AG04449 (cell line): ENCODE measurements at regions of chr4 and their contacts with region 1.

Region 1: DNA sequence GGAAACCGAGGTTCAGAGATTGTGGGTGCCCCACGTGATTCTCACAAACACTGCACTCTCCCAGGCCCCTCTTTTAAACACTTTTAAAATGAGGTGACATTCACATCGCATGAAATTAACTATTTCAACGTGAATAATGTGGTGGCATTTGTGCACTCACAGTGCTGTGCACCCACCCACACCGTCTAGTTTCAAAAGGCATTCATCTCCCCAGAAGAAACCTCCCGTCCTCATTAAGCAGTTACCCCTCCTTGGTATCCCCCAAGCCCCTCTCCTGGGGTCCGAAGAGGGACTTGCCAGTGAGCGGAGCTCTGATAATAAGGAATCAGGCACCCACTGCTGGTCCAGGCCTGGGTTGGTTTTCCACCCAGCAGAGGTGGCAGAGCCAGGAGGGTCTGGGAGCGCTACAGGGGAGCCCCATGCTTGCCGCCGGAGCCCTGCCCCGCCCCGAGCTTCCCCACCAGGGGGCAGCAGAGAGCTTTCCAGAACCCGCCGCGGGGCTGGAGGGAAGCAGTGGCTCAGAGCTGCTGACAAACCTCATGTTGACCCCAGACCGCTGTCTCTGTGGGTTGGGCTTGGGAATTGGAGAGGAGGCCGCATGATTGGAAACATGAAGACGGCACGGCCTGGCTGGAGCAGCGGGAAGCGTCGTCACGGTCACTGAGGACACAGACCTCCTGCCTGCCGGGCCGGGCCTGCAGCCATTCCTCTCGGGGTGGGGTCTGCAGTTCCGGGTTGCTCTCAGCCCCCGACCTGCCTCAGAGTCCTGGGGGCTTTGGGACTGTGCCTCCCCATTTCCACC is 27.5 kb upstream of the HTRA3 start:
- DNase-seq: peak; percentile 16
- H3K4me3 ChIP-seq: no peak overlapping the region
- CTCF ChIP-seq: peak; percentile 95

Region 2: DNA sequence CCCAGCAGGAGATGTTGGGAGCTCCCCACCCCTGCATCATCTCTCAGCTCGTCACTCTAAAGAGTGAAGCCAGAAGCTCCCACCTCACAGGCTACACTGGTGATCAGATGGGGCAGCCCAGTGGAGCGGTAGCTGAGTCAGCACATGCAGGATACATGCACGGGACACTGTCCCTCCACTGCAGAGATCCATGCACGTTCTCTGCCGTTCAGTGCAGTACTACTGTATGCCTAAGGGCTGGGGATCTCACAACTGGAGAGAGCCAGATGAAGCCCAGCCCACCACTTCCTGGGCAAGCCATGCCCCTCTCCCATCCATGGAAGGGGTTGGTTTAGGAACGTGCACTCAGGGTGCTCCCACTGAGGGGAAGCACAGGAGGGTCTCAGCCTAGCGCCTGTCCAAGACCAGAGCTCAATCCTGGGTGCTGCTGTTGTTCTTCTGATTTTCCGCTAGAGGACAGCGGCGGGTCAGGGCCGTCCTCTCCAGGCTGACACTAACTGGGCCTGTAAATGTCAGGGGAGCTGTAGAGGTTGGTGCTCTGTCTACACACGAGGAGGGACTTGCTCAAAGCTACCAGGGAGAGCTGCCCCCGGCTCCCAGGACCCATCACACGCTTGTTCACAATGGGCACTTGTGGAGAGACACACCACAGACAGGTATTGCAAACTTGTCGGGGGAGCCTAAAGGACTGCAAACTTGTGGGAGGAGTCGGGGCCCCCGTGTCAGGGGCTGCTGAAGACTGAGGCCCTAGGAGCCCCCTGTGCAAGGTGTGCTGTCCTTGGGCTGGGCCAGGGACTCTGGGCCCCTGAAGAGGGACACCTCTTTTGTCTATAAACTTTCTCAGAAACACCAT is 65.3 kb before region 1 on chr4:
- CTCF ChIA-PET with region 1: interaction called, 21 read pairs
- POLR2A ChIA-PET with region 1: no interaction called
- DNase-seq: no peak
- H3K4me3 ChIP-seq: no peak overlapping the region
- CTCF ChIP-seq: peak; percentile 86

Region 3: DNA sequence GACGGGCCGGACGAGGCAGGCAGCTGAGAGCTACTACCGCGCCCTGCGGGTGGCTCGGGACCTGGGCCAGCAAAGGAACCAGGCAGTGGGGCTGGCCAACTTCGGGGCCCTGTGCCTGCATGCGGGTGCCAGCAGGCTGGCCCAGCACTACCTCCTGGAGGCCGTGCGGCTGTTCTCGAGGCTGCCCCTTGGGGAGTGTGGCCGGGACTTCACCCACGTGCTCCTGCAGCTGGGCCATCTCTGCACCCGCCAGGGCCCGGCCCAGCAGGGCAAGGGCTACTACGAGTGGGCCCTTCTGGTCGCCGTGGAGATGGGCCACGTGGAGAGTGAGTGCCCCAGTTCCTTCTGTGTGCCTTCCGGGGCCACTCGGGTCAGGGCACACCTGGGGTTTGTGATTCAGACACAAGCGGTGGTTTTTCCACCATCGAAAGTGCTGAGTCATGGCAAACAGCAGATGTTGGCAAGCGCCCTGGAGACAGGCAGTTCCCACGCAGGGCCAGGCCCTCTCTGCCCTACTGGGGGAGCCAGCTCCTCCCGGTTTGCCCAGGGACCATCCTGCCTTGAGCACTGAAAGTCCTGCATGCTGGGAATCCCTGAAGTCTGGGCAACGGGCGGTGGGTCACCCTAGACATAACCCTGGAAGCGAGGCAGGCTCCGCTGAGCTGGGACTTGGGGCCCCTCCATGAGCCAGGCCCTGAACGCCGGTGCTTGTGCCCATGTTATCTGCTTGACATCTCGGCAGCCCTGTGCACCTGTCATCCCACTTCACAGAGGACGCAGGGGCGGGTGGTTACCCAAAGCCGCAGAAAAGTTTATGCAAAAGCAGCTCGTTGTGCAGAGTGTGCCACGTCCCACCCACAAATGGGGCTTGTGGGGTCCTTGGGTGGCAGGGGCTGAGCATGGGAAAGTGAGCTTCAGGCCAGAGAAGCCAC is 13.5 kb before region 1 on chr4:
- CTCF ChIA-PET with region 1: interaction called, 17 read pairs
- POLR2A ChIA-PET with region 1: no interaction called
- DNase-seq: peak; percentile 16
- H3K4me3 ChIP-seq: no peak overlapping the region
- CTCF ChIP-seq: no peak

Region 4: DNA sequence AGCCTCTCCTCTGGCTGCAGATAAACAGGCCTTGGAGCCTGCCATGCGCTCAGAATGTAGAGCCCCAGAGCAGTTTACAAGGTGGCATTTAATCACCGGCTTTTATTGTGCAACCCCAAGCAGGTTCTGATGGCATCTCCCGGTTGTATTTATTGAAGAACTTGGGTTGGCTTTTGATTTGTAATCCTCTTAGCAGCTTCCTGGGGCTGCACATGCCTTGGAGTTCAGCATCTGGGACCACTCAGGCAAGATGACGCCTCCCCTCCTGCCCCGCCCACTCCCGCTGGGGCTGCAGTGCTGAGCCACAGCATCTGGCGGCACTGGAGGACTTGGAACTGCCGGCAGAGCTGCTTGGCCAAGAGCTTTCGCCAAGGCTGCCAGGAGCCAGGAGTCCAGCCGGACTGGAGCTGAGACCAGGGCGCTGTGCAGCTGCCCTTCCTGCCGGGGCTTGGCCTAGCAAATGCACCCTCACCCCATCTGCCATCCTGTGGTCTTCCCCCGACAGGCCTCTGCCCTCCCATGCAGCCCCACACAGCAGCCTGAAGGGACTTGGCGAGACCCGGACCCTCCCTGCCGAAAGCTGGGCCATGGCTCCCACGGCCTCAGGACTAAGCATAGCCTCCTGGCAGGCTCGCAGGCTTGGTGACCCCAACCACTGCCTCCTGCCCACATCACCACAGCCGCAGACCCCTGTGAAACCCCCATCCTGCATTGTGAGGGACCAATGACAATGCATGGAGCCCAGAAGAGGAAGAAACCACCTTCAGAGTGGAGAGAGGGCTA is 32.9 kb after region 1 on chr4:
- CTCF ChIA-PET with region 1: interaction called, 11 read pairs
- POLR2A ChIA-PET with region 1: no interaction called
- DNase-seq: peak; percentile 36
- H3K4me3 ChIP-seq: no peak overlapping the region
- CTCF ChIP-seq: peak; percentile 82

Region 5: DNA sequence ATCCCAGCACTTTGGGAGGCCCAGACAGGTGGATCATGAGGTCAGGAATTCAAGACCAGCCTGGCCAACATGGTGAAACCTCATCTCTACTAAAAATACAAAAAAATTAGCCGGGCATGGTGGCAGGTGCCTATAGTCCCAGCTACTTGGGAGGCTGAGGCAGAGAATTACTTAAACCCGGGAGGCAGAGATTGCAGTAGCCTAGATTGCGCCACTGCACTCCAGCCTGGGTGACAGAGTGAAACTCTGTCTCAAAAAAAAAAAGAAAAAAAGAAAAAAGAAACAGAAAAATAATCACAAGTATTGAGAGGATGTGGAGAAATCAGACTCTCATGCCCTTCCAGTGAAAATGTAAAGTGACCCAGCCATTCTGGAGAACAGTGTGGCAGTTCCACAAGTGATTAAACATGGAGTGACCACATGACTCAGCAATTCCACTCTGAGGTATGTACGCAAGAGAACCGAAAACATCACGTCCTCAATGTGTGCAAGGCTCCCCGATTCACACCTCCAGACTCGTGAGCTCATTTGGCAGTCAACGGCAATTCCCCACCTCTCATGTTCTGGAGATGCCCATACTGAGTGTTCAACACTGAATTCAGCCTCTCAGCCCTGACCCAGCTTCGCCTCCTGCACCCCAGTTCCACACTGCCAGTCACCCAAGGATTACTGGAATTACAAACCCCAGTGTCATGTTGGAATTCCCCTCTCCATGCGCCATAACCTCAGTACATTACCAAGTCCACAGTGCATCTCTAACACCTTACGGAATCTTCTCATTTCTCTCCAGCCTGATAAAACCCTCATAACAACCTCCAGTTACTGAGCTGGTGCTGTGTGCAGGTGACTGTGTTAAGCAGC is 177.3 kb after region 1 on chr4:
- CTCF ChIA-PET with region 1: interaction called, 25 read pairs
- POLR2A ChIA-PET with region 1: no interaction called
- DNase-seq: no peak
- H3K4me3 ChIP-seq: no peak overlapping the region
- CTCF ChIP-seq: no peak

Region 6: DNA sequence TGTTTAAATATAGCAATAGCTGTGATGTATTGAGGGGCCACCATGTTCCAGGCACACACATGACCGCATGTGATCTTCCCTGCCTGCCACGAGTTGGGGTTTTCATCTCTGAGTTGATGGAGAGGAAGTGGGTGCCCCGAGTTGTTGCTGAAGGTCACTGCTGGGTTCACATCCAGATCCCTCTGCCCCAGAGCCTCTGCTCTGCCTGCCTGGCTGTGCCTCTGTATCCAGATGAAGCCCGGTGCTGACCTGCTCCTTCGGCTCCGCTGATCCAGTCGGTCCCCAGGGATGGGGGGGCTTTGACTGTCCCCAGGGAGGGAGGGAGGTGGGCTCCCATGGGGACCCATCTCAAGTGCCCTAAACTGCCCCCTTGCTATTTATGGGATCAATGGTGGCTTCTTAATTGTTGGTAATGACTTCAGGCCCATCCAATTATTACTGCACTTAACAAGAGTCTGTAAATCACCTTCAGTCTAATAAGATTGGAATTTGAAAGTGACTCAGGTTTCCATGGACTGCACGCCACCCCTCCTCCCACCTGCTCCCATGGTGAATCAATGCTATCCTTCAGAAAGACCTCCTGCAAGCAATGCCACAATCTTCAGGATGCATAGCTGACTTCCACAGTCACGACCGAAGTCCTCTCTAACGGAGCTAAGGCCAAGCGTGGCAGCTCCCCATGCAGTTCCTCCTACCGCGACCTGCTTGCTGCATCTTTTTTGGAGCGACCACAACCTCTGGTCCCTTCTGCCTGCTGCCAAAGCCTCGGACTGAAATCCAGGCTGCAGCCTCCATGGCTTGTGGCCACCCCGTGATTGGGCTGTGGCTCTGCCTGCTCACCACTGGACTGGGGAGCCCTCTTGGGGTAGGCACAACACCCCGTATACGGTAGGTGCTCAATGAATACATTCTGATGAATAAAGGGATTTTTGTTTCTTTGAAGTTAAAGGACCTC is 423.6 kb after region 1 on chr4:
- CTCF ChIA-PET with region 1: no interaction called
- POLR2A ChIA-PET with region 1: no interaction called
- DNase-seq: no peak
- H3K4me3 ChIP-seq: no peak overlapping the region
- CTCF ChIP-seq: no peak